Cardiac septum (tissue), 1 donor: ENCODE measurements at regions of chr5 and their contacts with region 1.

Region 1: GRCh38 chr5:145764325-145764724 is 70.8 kb downstream of the PRELID2 start:
- DNase-seq: no peak

Region 2: GRCh38 chr5:145797336-145797735 is 33.0 kb after region 1 on chr5:
- intact Hi-C with region 1: loop called (anchors 5 kb)
- DNase-seq: no peak